ENCODE measurements at regions of chr6 and their contacts with region 1.

Region 1: GRCh38 chr6:42547407-42548329 is 16.2 kb upstream of the UBR2 start:
- DNase-seq: peak; percentile 90
- ATAC-seq: peak; percentile 99
- H3K4me3 Mint-ChIP-seq: peak overlapping the region; percentile 64
- H3K27ac Mint-ChIP-seq: no peak overlapping the region
- H3K4me1 Mint-ChIP-seq: peaks cover 13% of the 10 kb centered on the region
- H3K27me3 Mint-ChIP-seq: peaks cover 10% of the 10 kb centered on the region
- CTCF ChIP-seq: peak; percentile 97

Region 2: DNA sequence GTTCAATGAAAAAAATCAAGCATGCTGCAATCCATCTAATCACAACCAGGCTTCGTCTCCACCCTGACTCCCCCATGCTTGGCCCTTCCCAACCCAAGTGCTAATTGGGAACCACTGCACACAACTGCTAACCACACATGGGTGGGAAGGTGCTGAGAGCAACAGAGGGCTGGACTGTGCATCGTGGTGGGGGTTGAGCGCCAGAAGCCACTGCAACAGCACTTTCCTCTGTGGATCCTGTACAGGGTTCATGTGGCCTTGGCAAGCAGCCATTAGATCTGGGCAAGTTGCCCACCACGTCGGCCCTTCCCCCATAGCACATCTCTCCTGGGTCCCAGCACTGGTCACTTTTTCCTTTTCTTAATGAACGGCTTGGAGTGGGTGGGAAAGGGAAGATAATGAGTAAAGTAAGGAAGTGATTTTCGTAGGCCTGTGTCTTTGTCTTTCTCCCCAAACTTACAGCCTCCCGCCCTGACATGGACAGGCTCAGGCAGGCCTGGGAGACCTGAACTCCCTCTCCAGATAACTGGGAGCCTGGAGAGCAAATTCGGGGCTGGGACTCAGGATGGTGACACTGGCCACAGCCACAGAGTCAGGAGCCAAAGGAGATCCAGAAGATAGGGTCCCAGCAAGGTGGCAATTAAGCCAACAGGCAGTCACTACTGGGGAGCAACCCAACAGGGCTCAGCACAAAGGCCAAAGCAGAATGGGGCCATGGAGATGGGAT is 295.6 kb before region 1 on chr6:
- CTCF ChIA-PET with region 1: interaction called, 14 read pairs
- POLR2A ChIA-PET with region 1: no interaction called
- intact Hi-C with region 1: no loop called
- DNase-seq: no peak
- ATAC-seq: no peak
- H3K4me3 Mint-ChIP-seq: no peak overlapping the region
- H3K27ac Mint-ChIP-seq: no peak overlapping the region
- H3K4me1 Mint-ChIP-seq: no peaks in the 10 kb centered on the region
- H3K27me3 Mint-ChIP-seq: no peaks in the 10 kb centered on the region
- CTCF ChIP-seq: no peak

Region 3: DNA sequence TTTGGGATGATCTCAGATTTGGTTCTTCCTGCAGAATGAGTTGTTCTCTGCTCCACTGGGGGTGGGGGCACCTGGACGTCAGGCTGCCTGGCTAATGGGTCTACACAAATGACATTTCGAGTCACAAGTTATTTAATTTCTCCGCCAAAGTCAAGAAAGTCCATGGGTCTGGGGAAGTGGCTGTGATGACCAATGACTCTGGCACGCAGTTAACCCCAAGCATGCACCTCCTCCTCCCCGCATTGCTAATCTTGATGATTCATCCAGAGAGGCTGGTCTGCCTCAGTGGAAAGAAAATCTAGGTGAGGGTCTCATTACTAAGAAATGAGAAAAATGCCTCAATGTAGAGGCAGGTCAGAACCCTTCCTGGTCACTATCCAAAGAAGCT is 231.7 kb before region 1 on chr6:
- CTCF ChIA-PET with region 1: interaction called, 38 read pairs
- POLR2A ChIA-PET with region 1: no interaction called
- intact Hi-C with region 1: no loop called
- DNase-seq: peak; percentile 35
- ATAC-seq: peak; percentile 60
- H3K4me3 Mint-ChIP-seq: no peak overlapping the region
- H3K27ac Mint-ChIP-seq: no peak overlapping the region
- H3K4me1 Mint-ChIP-seq: peaks cover 55% of the 10 kb centered on the region
- H3K27me3 Mint-ChIP-seq: no peaks in the 10 kb centered on the region
- CTCF ChIP-seq: no peak

Region 4: GRCh38 chr6:42390228-42390934 is 157.3 kb before region 1 on chr6:
- CTCF ChIA-PET with region 1: interaction called, 65 read pairs
- POLR2A ChIA-PET with region 1: interaction called, 3 read pairs
- intact Hi-C with region 1: no loop called
- DNase-seq: peak; percentile 83
- ATAC-seq: peak; percentile 82
- H3K4me3 Mint-ChIP-seq: peak overlapping the region; percentile 73
- H3K27ac Mint-ChIP-seq: peak overlapping the region; percentile 96
- H3K4me1 Mint-ChIP-seq: peaks cover 95% of the 10 kb centered on the region
- H3K27me3 Mint-ChIP-seq: no peaks in the 10 kb centered on the region
- CTCF ChIP-seq: no peak

Region 5: DNA sequence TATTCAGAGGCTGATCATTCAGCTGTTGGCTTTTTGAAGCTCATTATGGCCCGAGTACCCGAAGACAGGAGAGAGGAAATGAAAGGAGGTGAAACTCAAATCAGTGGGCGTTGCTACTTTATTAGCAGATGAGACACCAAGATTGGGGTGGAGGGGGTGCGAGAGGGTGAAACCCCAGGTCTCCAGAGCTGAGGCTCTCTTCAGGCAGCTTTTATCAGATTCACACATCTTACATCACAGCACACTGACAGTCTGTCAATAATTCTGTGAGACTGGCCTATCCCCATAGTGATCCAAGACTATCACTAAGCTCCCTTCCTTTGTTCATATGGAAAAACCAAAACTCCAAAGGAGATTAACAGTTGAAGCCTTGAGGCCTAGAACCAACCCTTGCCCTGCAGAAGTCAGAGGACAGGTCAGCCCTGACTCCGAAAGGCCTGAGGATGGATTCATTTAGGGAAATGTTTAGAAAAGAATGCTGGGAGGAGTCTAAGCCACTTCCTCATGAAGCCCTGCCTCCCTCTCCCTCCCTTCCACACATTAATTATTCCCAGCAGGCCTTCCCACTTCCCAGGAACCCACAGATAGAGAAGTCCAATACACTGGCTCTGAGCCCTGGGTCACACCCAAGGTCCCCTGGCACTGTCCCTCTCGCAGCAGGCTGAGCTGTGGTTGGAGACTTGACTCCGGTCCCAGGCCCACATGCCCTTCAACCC is 119.2 kb before region 1 on chr6:
- CTCF ChIA-PET with region 1: interaction called, 15 read pairs
- POLR2A ChIA-PET with region 1: no interaction called
- intact Hi-C with region 1: no loop called
- DNase-seq: peak; percentile 77
- ATAC-seq: peak; percentile 79
- H3K4me3 Mint-ChIP-seq: no peak overlapping the region
- H3K27ac Mint-ChIP-seq: peak overlapping the region; percentile 26
- H3K4me1 Mint-ChIP-seq: peaks cover 65% of the 10 kb centered on the region
- H3K27me3 Mint-ChIP-seq: no peaks in the 10 kb centered on the region
- CTCF ChIP-seq: no peak

Region 6: DNA sequence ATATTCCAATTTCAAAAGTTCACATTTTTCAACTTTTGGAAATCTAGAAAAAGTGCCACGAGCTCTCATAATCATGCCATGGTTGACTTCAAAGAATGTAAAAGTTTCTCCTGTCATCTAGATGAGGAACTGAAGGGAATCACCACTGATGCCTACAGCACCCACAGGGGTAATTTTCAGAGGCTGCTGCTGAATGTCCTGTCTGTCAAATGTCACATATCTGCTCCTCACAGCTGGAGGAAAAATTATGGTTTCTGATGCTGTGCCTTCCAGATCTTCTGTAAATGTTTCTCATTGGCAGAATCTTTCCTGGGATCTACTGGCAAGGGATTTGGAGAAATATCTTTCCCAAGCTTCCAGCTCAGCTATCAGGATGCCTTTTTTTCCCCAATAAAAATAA is 63.4 kb before region 1 on chr6:
- CTCF ChIA-PET with region 1: interaction called, 14 read pairs
- POLR2A ChIA-PET with region 1: no interaction called
- intact Hi-C with region 1: no loop called
- DNase-seq: no peak
- ATAC-seq: no peak
- H3K4me3 Mint-ChIP-seq: no peak overlapping the region
- H3K27ac Mint-ChIP-seq: no peak overlapping the region
- H3K4me1 Mint-ChIP-seq: no peaks in the 10 kb centered on the region
- H3K27me3 Mint-ChIP-seq: no peaks in the 10 kb centered on the region
- CTCF ChIP-seq: no peak

Region 7: GRCh38 chr6:42563697-42564505 is 16.2 kb after region 1 on chr6 and contains the start of gene UBR2:
- CTCF ChIA-PET with region 1: interaction called, 57 read pairs
- POLR2A ChIA-PET with region 1: interaction called, 4 read pairs
- intact Hi-C with region 1: no loop called
- DNase-seq: peak; percentile 98
- ATAC-seq: peak; percentile 96
- H3K4me3 Mint-ChIP-seq: peak within 1 kb of the TSS; percentile 95
- H3K27ac Mint-ChIP-seq: peak within 1 kb of the TSS; percentile 93
- H3K4me1 Mint-ChIP-seq: peaks cover 24% of the 10 kb centered on the region
- H3K27me3 Mint-ChIP-seq: no peaks in the 10 kb centered on the region
- CTCF ChIP-seq: peak; percentile 37
- total RNA-seq, gene UBR2: 24.5 to 25.8 TPM

Measured in activated CD8-positive, alpha-beta T cell treated with anti-CD3 and anti-CD28 coated beads for 36 hours (primary cell).